Colonic mucosa (tissue), 4 donors: ENCODE measurements at regions of chr4 and their contacts with region 1.

Region 1: DNA sequence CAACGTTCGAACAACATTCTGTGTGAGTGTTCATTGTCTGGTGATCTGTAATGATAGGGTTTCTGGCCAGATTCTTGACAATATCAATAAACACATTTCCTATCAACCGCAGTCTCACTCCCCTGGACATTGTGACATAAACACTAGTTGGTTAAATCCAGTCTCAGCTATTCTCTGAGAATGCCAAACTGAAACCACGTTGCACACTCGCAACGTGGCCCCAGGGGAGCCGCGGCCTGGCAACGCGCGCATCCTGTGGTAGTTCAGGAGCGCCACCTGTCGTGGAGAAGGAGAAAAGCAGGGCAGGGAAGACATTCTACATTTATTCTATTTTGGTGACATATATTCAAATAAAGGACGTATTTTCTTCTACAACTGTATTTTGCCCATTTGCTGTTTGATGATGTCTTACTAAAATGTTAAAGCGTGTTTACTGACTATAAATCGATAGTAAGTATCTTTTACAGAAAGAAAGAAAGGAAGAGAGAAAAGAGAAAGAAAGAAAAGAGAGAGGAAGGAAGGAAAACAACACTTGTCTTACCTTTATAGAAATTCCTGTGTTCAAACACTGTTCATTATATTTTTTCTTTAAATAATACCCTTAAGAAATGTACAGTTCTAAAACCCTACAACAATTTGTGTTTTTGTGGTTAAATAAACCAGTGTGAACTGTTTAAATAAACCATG is 738.3 kb upstream of the FRG1 start:
- DNase-seq: peak; percentile 32
- H3K4me3 ChIP-seq: no peak overlapping the region
- H3K27ac ChIP-seq: no peak overlapping the region
- H3K4me1 ChIP-seq: no peaks in the 10 kb centered on the region
- H3K27me3 ChIP-seq: no peaks in the 10 kb centered on the region
- CTCF ChIP-seq: peak; percentile 58

Region 2: GRCh38 chr4:187606581-187606980 is 1595.7 kb before region 1 on chr4:
- intact Hi-C with region 1: loop called (anchors 5 kb)
- DNase-seq: peak; percentile 27
- H3K4me3 ChIP-seq: no peak overlapping the region
- H3K27ac ChIP-seq: no peak overlapping the region
- H3K4me1 ChIP-seq: no peaks in the 10 kb centered on the region
- H3K27me3 ChIP-seq: no peaks in the 10 kb centered on the region
- CTCF ChIP-seq: peak; percentile 92